ENCODE measurements at regions of chr7 and their contacts with region 1.

Region 1: DNA sequence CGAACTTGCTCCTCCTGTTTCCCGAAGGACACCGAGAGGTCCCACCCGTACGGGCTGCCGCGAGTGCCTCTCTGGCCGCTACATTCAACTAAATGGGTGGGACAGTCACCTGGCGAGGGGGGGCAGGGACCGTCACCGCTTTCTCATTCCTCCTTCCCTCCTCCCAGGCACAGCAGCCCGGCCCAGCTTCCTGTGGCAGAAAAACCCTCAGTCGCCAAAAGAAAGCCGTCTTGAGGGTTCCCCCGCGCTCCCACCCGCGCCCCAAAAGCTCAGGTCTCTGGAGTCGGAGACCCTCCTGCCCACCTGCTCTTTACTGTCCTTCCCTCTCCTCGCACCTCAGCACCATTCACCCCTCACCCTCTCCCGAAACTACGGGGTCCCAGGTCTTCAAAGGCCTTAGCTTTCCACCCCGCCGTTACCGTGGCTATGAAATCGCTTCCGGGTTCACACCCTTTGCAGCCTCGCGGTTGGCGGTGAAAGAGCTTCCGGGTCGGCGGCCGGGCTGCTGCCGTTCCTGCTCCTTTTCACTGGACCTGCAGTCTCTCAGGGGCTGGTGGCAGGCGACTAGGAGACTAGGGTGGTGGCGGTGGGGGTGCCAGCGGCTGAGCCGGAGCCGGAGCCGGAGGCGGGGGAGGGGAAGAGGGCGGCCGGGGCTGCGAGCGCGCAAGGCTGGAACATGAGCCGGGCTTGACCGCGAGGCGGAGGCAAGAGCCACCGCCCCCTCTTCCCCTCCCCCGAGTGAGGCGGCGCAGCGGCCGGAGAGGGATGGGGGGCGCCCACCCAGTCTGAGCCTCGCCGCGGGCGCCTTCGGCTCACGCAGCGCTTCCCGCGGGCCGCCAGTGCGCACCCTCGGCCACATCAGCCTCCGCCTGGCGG is at the starts of genes ANKIB1 and KRIT1:
- DNase-seq: peak; percentile 87

Region 2: DNA sequence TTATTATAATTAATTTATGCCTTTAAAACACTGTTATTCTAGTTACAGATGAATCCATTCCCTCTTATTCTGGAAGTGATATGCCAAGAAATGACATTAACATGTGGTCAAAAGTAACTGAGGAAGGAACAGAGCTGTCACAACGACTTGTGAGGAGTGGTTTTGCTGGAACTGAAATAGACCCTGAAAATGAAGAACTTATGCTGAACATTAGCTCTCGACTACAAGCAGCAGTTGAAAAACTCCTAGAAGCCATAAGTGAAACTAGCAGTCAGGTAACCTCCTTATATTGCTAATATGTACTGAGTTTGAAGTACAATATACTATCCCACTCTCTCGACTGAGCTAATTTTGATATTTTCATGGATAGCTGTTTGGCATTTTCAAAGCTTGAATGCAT is 193.0 kb before region 1 on chr7:
- CTCF ChIA-PET with region 1: no interaction called
- POLR2A ChIA-PET with region 1: no interaction called
- DNase-seq: no peak

Region 3: GRCh38 chr7:92134271-92135051 is 111.3 kb before region 1 on chr7 and contains the start of gene CYP51A1:
- CTCF ChIA-PET with region 1: interaction called, 3 read pairs
- POLR2A ChIA-PET with region 1: interaction called, 13 read pairs
- DNase-seq: peak; percentile 85

Region 4: GRCh38 chr7:92228100-92228499 is 17.6 kb before region 1 on chr7:
- CTCF ChIA-PET with region 1: no interaction called
- POLR2A ChIA-PET with region 1: interaction called, 10 read pairs
- DNase-seq: no peak

Measured in HEK293T (cell line).